Activated CD4-positive, alpha-beta memory T cell treated with anti-CD3 and anti-CD28 coated beads, Interleukin-2, amount 10 ng/mL, durations not matched to agents 7 days and 5 days (primary cell): ENCODE measurements at regions of chr3 and their contacts with region 1.

Region 1: GRCh38 chr3:66483406-66483906 is 17.4 kb downstream of the LRIG1 start:
- DNase-seq: no peak
- H3K4me3 Mint-ChIP-seq: peak overlapping the region; percentile 6
- H3K27ac Mint-ChIP-seq: no peak overlapping the region
- H3K4me1 Mint-ChIP-seq: peaks cover 82% of the 10 kb centered on the region
- H3K27me3 Mint-ChIP-seq: no peaks in the 10 kb centered on the region

Region 2: DNA sequence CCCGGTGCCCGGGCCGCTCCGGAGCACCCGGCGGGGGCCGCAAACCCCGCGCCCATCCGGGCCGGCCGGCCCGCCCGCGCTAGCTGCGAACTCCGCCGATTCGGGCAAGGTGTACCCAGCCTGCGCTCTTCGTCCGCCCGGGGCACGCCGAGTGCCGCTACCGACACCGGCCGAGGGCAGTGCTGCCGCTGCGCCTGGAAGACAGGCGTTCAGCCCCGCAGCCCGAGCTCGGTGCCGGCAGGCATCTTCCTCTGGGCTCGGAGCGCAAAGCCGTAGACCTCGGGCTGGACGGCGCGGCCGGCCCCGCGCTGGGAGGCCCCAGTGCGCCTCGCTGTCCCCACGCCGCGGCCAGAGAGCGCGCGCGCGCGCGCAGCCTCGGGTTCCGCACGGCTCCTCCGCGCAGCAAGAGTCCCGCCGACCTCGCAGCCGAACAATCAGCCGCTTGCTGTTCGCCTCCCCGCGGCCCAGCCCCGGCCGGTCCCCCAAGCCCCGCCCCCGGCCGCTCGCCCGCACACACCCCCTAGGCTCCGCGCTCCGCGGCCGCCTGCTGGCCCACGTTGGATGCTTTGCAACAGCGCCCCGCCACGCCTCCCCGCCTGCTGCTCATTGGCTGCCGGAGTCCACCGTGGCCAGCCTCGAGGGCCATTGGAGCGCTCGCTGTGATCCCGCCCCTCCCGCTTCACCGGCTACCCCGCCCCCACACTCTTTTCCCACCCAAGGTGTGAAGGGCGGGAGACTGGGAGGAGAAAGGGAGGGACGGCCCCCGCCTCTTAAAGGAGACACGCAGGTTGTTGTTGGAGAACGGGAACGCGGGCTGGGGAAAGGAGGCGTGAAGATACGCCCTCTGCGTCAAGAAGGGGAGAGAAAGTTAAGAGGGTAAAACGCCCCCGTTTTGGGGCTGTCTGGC is 17.4 kb after region 1 on chr3 and contains the start of gene LRIG1:
- CTCF ChIA-PET with region 1: interaction called, 8 read pairs
- POLR2A ChIA-PET with region 1: interaction called, 117 read pairs
- DNase-seq: peak; percentile 99
- H3K4me3 Mint-ChIP-seq: peak within 1 kb of the TSS; percentile 88
- H3K27ac Mint-ChIP-seq: peak within 1 kb of the TSS; percentile 73
- H3K4me1 Mint-ChIP-seq: peaks cover 64% of the 10 kb centered on the region
- H3K27me3 Mint-ChIP-seq: peaks cover 7% of the 10 kb centered on the region
- total RNA-seq, gene LRIG1: 43.0 to 43.7 TPM